Gastrocnemius medialis (tissue), 4 donors: ENCODE measurements at regions of chr22 and their contacts with region 1.

Region 1: GRCh38 chr22:17830043-17830961 is 56.0 kb upstream of the BID start:
- DNase-seq: peak; percentile 75 to 87
- ATAC-seq: peak; percentile 83 to 88
- H3K4me3 ChIP-seq: no peak overlapping the region
- H3K27ac ChIP-seq: peak overlapping the region; percentile 57 to 88 (median 68)
- H3K4me1 ChIP-seq: peaks cover 39 to 48% of the 10 kb centered on the region in 2 donors
- H3K27me3 ChIP-seq: no peaks in the 10 kb centered on the region
- CTCF ChIP-seq: peak; percentile 99 to 100 (median 100)
- POLR2A ChIP-seq: no peak

Region 2: DNA sequence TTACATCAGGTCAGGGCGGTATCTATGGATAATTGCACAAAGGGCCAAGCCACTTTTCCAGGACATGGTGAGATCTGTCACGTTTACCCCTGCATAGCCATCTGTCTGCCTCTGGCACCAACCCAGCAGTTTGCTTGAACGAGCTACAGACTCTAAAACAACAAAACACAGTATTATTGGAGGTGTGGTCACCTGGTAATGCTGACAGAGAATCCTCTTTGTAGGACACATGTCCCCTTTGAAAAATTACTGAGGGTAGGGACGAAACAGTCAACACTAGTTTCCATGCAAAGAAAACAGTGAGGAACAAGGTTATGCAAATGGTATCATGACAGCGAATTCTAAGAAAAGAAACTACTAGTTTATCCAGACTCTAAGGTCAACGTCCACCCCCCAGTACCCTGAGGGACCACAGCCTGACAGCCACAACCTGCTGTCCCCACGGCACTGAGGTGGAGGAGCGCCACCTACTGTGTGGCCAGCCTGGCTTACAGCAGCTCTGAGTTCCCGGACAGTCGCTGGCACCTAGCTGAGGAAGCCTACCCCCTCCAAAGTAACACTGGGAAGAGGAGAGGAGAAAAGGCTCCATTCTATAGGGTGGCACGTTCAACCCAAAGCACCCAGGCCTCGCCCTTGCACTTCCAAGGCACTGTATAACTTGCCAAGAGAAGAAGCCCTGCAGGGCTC is 61.3 kb after region 1 on chr22:
- in situ Hi-C with region 1: loop called (anchors 5 kb)
- intact Hi-C with region 1: loop called (anchors 1 kb)
- DNase-seq: peak; percentile 73 to 85
- ATAC-seq: peak; percentile 37 to 49
- H3K4me3 ChIP-seq: no peak overlapping the region
- H3K27ac ChIP-seq: peak overlapping the region; percentile 90 to 95 (median 94)
- H3K4me1 ChIP-seq: peaks cover 41 to 45% of the 10 kb centered on the region in 2 donors
- H3K27me3 ChIP-seq: no peaks in the 10 kb centered on the region
- CTCF ChIP-seq: peak; percentile 79 to 89 (median 84)
- POLR2A ChIP-seq: no peak

Region 3: DNA sequence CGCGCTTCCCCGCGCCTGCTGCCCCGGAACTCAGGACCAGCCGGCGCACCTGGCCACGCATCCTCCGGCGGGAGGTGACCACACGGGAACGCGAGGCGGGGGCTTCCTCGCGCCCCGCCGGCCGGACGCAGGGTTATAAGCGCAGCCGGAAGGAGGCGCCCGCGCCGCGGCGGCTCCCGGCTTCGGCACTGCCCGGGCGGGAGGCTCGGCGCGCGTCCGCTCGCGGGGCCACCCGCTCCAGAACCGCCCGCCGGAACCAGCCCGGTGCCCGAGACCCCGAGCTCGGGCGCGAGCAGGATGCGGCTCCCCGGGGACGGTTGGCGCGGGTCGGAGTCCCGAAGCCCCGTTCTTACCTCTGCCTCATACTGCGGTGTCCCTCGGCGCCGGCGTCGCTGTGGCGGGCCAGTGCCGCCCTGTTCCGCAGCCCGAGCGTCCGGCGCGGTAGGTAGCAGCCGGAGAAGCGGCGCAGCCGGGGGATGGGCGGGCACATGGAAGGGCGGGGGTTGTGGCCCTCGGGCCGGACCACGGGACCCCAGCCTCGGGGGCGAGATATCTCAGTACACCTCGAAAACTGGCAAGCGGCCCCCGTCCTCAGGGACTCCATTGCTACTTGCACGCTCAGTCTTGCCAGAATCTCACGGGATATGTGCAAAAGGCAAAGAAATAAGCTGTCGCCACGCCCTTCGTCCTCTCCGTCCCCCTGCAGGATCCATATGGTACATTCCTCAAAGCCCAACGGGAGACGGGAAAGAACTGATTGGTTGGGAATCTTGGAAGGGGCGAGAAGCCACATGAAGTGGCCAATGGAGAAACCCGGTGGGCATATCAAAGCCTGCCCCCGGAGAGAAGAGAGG is 171.0 kb after region 1 on chr22:
- in situ Hi-C with region 1: no loop called
- intact Hi-C with region 1: loop called (anchors 2 kb)
- DNase-seq: peak; percentile 84 to 92
- ATAC-seq: peak; percentile 95 to 96
- H3K4me3 ChIP-seq: peak overlapping the region; percentile 62 to 89 (median 76)
- H3K27ac ChIP-seq: peak overlapping the region; percentile 85 to 95 (median 92)
- H3K4me1 ChIP-seq: peaks cover 15 to 24% of the 10 kb centered on the region in 2 donors
- H3K27me3 ChIP-seq: no peaks in the 10 kb centered on the region
- CTCF ChIP-seq: peak; percentile 46 to 82 (median 79)
- POLR2A ChIP-seq: peak; percentile 84 to 89

Region 4: GRCh38 chr22:18070556-18071306 is 240.4 kb after region 1 on chr22:
- in situ Hi-C with region 1: loop called (anchors 5 to 10 kb)
- intact Hi-C with region 1: no loop called
- DNase-seq: no peak
- ATAC-seq: no peak
- H3K4me3 ChIP-seq: no peak overlapping the region
- H3K27ac ChIP-seq: no peak overlapping the region
- H3K4me1 ChIP-seq: peaks cover 15 to 20% of the 10 kb centered on the region in 2 donors
- H3K27me3 ChIP-seq: no peaks in the 10 kb centered on the region
- CTCF ChIP-seq: peak in 1 of 5 experiments; percentile 16
- POLR2A ChIP-seq: no peak

Region 5: GRCh38 chr22:18077639-18078328 is 247.5 kb after region 1 on chr22 and contains the start of gene PEX26:
- in situ Hi-C with region 1: loop called (anchors 5 to 10 kb)
- intact Hi-C with region 1: loop called (anchors 1 kb)
- DNase-seq: peak; percentile 95 to 96
- ATAC-seq: peak; percentile 89 to 90
- H3K4me3 ChIP-seq: peak within 1 kb of the TSS; percentile 72 to 98 (median 86)
- H3K27ac ChIP-seq: peak within 1 kb of the TSS; percentile 82 to 92 (median 90)
- H3K4me1 ChIP-seq: peaks cover 26 to 36% of the 10 kb centered on the region in 2 donors
- H3K27me3 ChIP-seq: no peaks in the 10 kb centered on the region
- CTCF ChIP-seq: no peak
- POLR2A ChIP-seq: peak; percentile 87 to 88
- total RNA-seq, gene PEX26: 16.4 to 24.7 (median 16.8) TPM